ENCODE measurements at regions of chr10 and their contacts with region 1.

Region 1: GRCh38 chr10:89793649-89794254 is 92.4 kb downstream of the KIF20B start:
- DNase-seq: peak in 3 of 5 donors; percentile 29 to 87 (median 86)
- H3K4me3 ChIP-seq: no peak overlapping the region
- H3K27ac ChIP-seq: no peak overlapping the region
- H3K4me1 ChIP-seq: peaks cover 0 to 3% (median 0%) of the 10 kb centered on the region in 3 donors
- H3K27me3 ChIP-seq: no peaks in the 10 kb centered on the region
- CTCF ChIP-seq: peak; percentile 81

Region 2: DNA sequence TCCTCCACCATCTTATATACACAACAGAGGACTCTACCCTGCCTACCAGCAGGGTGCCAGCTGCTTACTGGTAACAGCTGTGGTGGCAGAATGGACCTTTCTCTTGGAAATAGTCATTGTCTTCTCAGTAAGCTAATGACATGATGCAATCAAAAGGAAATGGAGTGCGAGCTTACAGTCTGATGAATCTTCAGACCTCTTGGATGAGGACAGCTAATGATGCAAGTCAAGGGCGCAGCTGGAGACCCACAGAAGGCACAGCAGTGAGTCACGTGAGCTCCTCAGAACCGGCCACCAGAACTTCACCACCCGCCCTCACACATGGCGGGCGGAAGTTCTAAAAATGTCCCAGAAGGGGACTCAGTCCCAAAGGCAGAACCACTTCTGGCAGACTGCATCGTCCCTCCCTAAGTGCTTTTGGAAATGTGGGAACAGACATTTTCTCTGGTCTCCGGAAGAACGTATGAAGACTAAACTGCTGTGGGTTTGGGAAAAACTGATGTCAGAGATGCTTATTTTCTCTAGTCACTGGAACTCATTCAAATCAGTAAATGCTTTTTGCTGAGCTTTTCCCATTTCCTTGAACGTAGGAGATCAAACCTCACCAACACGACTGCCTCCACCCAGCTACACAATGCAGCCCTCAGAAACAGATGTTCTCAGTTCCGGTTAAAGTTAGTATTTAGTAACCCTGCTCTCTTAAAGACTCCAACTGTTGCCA is 706.8 kb before region 1 on chr10:
- intact Hi-C with region 1: no loop called
- DNase-seq: peak in 1 of 5 donors; percentile 79
- H3K4me3 ChIP-seq: no peak overlapping the region
- H3K27ac ChIP-seq: no peak overlapping the region
- H3K4me1 ChIP-seq: no peaks in the 10 kb centered on the region
- H3K27me3 ChIP-seq: no peaks in the 10 kb centered on the region
- CTCF ChIP-seq: no peak

Region 3: GRCh38 chr10:90862908-90863514 is 1069.3 kb after region 1 on chr10:
- intact Hi-C with region 1: loop called (anchors 10 kb)
- DNase-seq: peak in 1 of 5 donors; percentile 39
- H3K4me3 ChIP-seq: no peak overlapping the region
- H3K27ac ChIP-seq: no peak overlapping the region
- H3K4me1 ChIP-seq: no peaks in the 10 kb centered on the region
- H3K27me3 ChIP-seq: peaks cover 2% of the 10 kb centered on the region
- CTCF ChIP-seq: peak; percentile 44